ENCODE measurements at regions of chr5 and their contacts with region 1.

Region 1: DNA sequence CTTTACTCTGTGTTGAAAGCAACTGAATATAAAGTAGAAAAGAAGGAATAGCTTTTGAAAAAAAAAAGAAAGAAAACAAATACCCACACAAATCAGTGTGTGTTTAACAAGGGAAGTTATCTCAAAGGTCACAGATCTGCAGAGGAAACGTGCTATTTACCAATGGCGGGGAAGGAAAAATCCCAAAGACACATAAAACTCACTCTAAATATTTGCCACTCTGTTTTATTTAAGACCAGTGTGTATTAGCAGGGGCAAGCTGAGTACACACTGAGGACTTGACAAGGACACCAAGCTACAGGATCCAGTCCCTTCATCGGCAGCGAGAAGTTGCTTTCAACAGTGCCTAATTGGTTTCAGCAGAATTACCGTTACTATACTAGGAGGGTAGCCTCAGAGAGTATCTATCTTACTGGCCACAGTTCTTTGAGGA is 252.5 kb downstream of the DEPDC1B start:
- DNase-seq: peak; percentile 98
- ATAC-seq: peak; percentile 99
- H3K4me3 ChIP-seq: peak overlapping the region in 1 of 3 experiments; percentile 24; a peak in 1 of 6 replicates
- H3K27ac ChIP-seq: peak overlapping the region; percentile 69
- H3K4me1 ChIP-seq: peaks cover 83% of the 10 kb centered on the region
- H3K27me3 ChIP-seq: no peaks in the 10 kb centered on the region
- CTCF ChIP-seq: no peak; the same call in 1 of the 2 replicates
- EP300 ChIP-seq: peak in 1 of 2 experiments; percentile 99; a peak in 2 of 4 replicates
- POLR2A ChIP-seq: no peak; a peak in 1 of 4 replicates
- RAD21 ChIP-seq: no peak

Region 2: DNA sequence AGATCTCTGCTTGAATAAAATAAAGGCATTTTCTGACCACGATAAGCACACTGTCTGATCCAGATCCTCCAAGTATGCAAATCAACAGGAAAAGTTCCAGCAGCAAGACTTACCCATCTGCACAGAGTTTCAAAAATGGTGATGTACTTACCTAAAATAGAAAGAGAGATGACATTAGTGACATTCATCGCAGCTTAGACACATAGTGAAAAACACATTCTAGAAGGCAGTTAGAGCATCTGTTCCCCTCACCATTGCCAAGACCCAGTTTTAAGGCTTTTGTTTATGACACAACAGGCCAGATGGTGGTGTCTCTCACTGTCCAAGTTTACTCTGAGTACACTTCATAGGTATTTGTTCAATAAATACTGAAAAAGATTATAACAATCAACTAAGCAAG is 761.7 kb before region 1 on chr5:
- CTCF ChIA-PET with region 1: no interaction called
- POLR2A ChIA-PET with region 1: no interaction called
- in situ Hi-C with region 1: no loop called
- intact Hi-C with region 1: no loop called
- DNase-seq: no peak
- ATAC-seq: no peak
- H3K4me3 ChIP-seq: no peak overlapping the region
- H3K27ac ChIP-seq: no peak overlapping the region
- H3K4me1 ChIP-seq: no peaks in the 10 kb centered on the region
- H3K27me3 ChIP-seq: no peaks in the 10 kb centered on the region
- CTCF ChIP-seq: no peak
- EP300 ChIP-seq: no peak
- POLR2A ChIP-seq: no peak
- RAD21 ChIP-seq: no peak

Region 3: GRCh38 chr5:60295423-60295822 is 152.1 kb before region 1 on chr5:
- CTCF ChIA-PET with region 1: no interaction called
- POLR2A ChIA-PET with region 1: no interaction called
- in situ Hi-C with region 1: no loop called
- intact Hi-C with region 1: loop called (anchors 10 kb)
- DNase-seq: peak; percentile 31
- ATAC-seq: peak; percentile 92
- H3K4me3 ChIP-seq: no peak overlapping the region
- H3K27ac ChIP-seq: no peak overlapping the region
- H3K4me1 ChIP-seq: peaks cover 4% of the 10 kb centered on the region; the same call in 1 of the 2 replicates
- H3K27me3 ChIP-seq: no peaks in the 10 kb centered on the region
- CTCF ChIP-seq: peak; percentile 86
- EP300 ChIP-seq: no peak
- POLR2A ChIP-seq: no peak
- RAD21 ChIP-seq: peak; percentile 89

Region 4: GRCh38 chr5:60417500-60418181 is 29.9 kb before region 1 on chr5:
- CTCF ChIA-PET with region 1: no interaction called
- POLR2A ChIA-PET with region 1: interaction called, 18 read pairs
- in situ Hi-C with region 1: no loop called
- intact Hi-C with region 1: loop called (anchors 1 kb)
- DNase-seq: peak; percentile 97
- ATAC-seq: peak; percentile 99
- H3K4me3 ChIP-seq: peak overlapping the region in 1 of 3 experiments; percentile 14; a peak in 1 of 6 replicates
- H3K27ac ChIP-seq: peak overlapping the region; percentile 92
- H3K4me1 ChIP-seq: peaks cover 56% of the 10 kb centered on the region
- H3K27me3 ChIP-seq: no peaks in the 10 kb centered on the region
- CTCF ChIP-seq: no peak
- EP300 ChIP-seq: peak in 1 of 2 experiments; percentile 92; a peak in 2 of 4 replicates
- POLR2A ChIP-seq: no peak
- RAD21 ChIP-seq: no peak

Region 5: DNA sequence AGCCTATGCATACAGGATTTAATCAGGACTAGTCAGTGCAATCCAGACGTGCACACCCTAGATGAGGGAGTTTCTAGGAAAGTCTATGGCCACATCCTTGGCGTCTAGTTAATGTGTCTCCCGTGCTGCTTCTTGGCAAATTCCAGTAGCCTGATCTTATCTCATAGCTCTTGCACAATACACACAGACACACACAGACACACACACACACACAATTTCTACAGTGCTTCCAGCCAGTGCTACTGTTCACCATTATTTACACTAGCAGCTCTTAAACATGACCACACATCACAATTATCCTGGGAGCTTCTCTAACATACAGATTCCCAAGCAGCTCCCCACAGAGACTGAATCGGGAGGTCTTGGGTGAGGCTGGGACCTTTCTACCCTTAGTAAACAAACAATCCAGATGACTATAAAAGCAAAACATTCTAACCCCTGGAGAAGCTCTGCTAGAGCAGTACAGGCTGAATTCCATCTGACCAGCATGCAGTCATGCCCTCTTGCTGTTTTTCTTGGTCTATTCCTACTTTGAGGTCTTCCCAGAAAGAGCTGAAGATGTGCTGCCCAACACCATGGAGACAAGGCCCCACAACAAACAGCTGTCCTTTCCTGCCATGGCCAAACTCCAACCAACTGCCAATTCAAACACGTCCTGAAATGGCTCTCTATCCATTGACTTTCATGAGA is 15.8 kb after region 1 on chr5:
- CTCF ChIA-PET with region 1: no interaction called
- POLR2A ChIA-PET with region 1: interaction called, 14 read pairs
- in situ Hi-C with region 1: no loop called
- intact Hi-C with region 1: no loop called
- DNase-seq: peak; percentile 81
- ATAC-seq: peak; percentile 92
- H3K4me3 ChIP-seq: peak overlapping the region in 1 of 3 experiments; percentile 17; a peak in 1 of 6 replicates
- H3K27ac ChIP-seq: peak overlapping the region; percentile 79
- H3K4me1 ChIP-seq: peaks cover 44% of the 10 kb centered on the region
- H3K27me3 ChIP-seq: no peaks in the 10 kb centered on the region
- CTCF ChIP-seq: no peak
- EP300 ChIP-seq: peak in 1 of 2 experiments; percentile 56; a peak in 2 of 4 replicates
- POLR2A ChIP-seq: no peak
- RAD21 ChIP-seq: no peak

Region 6: GRCh38 chr5:60494635-60495034 is 47.1 kb after region 1 on chr5:
- CTCF ChIA-PET with region 1: no interaction called
- POLR2A ChIA-PET with region 1: interaction called, 4 read pairs
- in situ Hi-C with region 1: no loop called
- intact Hi-C with region 1: loop called (anchors 2 kb)
- DNase-seq: no peak
- ATAC-seq: no peak
- H3K4me3 ChIP-seq: no peak overlapping the region
- H3K27ac ChIP-seq: peak overlapping the region; percentile 44
- H3K4me1 ChIP-seq: peaks cover 95% of the 10 kb centered on the region
- H3K27me3 ChIP-seq: no peaks in the 10 kb centered on the region
- CTCF ChIP-seq: no peak
- EP300 ChIP-seq: no peak
- POLR2A ChIP-seq: no peak
- RAD21 ChIP-seq: no peak

Region 7: DNA sequence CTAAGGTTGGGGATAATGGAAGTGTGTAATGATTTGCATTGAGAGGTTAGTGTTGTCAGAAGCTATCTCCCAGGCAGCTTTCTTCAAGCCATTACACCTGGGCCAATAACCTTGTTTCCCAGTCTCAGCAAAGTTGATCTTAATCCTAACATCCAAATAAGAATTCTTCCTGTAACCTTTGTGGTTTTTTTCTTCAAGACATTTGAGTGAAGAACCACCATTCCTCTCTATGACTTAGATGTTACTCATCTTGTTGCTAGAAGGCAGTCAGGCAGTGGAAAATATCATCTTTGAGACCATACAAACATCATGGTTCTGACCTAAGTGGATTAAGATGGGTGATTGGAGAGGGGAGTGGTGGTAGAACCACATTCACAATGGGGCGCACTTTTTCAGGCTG is 601.0 kb after region 1 on chr5:
- CTCF ChIA-PET with region 1: no interaction called
- POLR2A ChIA-PET with region 1: no interaction called
- in situ Hi-C with region 1: no loop called
- intact Hi-C with region 1: loop called (anchors 5 kb)
- DNase-seq: no peak
- ATAC-seq: no peak
- H3K4me3 ChIP-seq: no peak overlapping the region
- H3K27ac ChIP-seq: no peak overlapping the region
- H3K4me1 ChIP-seq: peaks cover 7% of the 10 kb centered on the region; the same call in 1 of the 2 replicates
- H3K27me3 ChIP-seq: no peaks in the 10 kb centered on the region; a peak in 1 of 5 replicates
- CTCF ChIP-seq: no peak
- EP300 ChIP-seq: no peak
- POLR2A ChIP-seq: no peak
- RAD21 ChIP-seq: no peak